Activated CD4-positive, alpha-beta T cell treated with anti-CD3 and anti-CD28 coated beads, Interleukin-2, amount 10 ng/mL, durations not matched to agents 24 days and 14 days (primary cell): ENCODE measurements at regions of chr19 and their contacts with region 1.

Region 1: DNA sequence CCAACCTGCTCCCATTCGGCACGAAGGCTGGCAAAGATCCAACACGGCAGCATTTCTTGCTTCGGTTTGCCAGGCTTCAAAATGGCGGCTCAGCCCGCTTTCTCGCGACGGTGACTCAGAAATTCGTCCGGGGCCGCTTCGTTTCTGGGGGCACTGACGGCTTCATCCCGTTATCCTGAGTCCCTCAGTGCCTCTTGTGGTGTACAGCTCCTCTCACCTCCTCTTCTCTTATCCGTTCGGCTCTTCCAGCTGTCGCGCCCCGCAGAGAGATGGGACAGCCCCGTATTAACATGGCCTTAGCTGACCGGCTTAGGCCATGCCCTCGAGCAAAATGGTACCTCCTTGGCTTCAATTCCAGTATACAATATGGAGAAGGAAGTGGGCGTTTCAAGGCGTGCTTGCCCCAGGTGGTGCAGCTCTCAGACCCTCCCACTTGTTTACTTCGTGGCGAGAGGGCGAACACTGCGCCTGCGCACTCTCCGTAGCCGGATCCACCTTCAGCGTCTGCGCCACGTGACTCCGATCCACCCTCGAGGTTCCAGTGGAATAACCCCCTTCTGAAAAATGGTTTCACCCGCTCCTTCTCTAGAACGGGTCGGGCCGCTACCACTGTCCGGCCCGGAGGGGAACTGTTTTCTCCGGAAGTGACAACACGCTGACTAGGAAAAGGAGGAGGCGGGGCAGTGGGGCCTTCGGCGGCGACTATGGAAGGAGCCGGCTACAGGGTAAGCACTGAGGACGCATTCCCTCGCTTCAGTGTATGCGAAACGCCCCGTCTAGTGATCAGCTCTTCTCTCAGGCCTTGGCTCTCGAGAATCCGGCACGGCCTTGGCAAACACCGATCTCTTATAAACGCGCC is at the starts of genes AKT1S1 and TBC1D17:
- DNase-seq: peak; percentile 100
- H3K4me3 Mint-ChIP-seq: no peak within 1 kb of the TSS
- H3K27ac Mint-ChIP-seq: no peak within 1 kb of the TSS
- H3K4me1 Mint-ChIP-seq: peaks cover 23% of the 10 kb centered on the region
- H3K27me3 Mint-ChIP-seq: no peaks in the 10 kb centered on the region
- total RNA-seq, gene AKT1S1: 31.5 and 33.5 TPM in 2 replicates
- total RNA-seq, gene TBC1D17: 36.5 and 36.8 TPM in 2 replicates

Region 2: GRCh38 chr19:49497047-49497788 is 380.0 kb before region 1 on chr19:
- intact Hi-C with region 1: loop called (anchors 1 kb)
- DNase-seq: peak; percentile 93
- H3K4me3 Mint-ChIP-seq: peak overlapping the region; percentile 98
- H3K27ac Mint-ChIP-seq: peak overlapping the region; percentile 99
- H3K4me1 Mint-ChIP-seq: peaks cover 57% of the 10 kb centered on the region
- H3K27me3 Mint-ChIP-seq: no peaks in the 10 kb centered on the region

Region 3: GRCh38 chr19:49640113-49640898 is 236.9 kb before region 1 on chr19 and contains the start of gene RRAS:
- intact Hi-C with region 1: loop called (anchors 2 kb)
- DNase-seq: peak; percentile 100
- H3K4me3 Mint-ChIP-seq: peak within 1 kb of the TSS; percentile 97
- H3K27ac Mint-ChIP-seq: peak within 1 kb of the TSS; percentile 100
- H3K4me1 Mint-ChIP-seq: peaks cover 52% of the 10 kb centered on the region
- H3K27me3 Mint-ChIP-seq: no peaks in the 10 kb centered on the region
- total RNA-seq, gene RRAS: 4.1 and 5.0 TPM in 2 replicates

Region 4: GRCh38 chr19:49651029-49651825 is 226.0 kb before region 1 on chr19:
- intact Hi-C with region 1: no loop called
- DNase-seq: no peak
- H3K4me3 Mint-ChIP-seq: no peak overlapping the region
- H3K27ac Mint-ChIP-seq: no peak overlapping the region
- H3K4me1 Mint-ChIP-seq: no peaks in the 10 kb centered on the region
- H3K27me3 Mint-ChIP-seq: no peaks in the 10 kb centered on the region

Region 5: GRCh38 chr19:49766007-49766937 is 111.0 kb before region 1 on chr19:
- intact Hi-C with region 1: loop called (anchors 1 kb)
- DNase-seq: peak; percentile 100
- H3K4me3 Mint-ChIP-seq: peak overlapping the region; percentile 91
- H3K27ac Mint-ChIP-seq: peak overlapping the region; percentile 92
- H3K4me1 Mint-ChIP-seq: peaks cover 32% of the 10 kb centered on the region
- H3K27me3 Mint-ChIP-seq: no peaks in the 10 kb centered on the region

Region 6: DNA sequence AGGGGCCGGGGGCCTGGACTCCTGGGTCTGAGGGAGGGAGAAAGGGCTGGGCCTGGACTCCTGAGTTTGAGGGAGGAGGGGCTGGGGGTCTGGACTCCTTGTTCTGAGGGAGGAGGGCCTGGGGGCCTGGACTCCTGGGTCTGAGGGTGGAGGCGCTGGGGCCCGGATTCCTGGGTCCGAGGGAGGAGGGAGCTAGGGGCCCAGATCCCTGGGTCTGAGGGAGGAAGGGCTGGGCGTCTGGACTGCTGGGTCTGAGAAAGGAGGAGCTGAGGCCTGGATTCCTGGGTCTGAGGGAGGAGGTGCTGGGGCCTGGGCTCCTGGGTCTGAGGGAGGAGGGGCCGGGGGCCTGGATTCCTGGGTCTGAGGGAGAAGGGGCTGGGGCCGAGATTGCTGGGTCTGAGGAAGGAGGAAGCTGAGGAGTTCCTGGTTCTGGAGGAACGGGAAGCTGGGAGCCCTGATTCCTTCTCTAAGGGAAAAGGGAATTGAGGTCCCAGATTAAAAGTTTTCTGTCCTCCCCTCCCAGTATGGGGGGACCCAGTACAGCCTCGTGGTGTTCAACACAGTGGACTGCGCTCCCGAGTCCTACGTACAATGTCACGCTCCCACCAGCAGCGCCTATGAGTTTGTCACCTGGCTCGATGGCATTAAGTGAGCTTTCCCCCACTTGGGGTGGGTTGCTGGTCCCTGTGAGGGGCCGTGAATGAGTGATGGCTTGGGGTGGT is 58.4 kb before region 1 on chr19:
- intact Hi-C with region 1: no loop called
- DNase-seq: peak; percentile 64
- H3K4me3 Mint-ChIP-seq: peak overlapping the region; percentile 88
- H3K27ac Mint-ChIP-seq: peak overlapping the region; percentile 92
- H3K4me1 Mint-ChIP-seq: peaks cover 14% of the 10 kb centered on the region
- H3K27me3 Mint-ChIP-seq: peaks cover 2% of the 10 kb centered on the region

Region 7: GRCh38 chr19:49850473-49851342 is 26.5 kb before region 1 on chr19 and contains the start of gene PTOV1:
- intact Hi-C with region 1: loop called (anchors 1 kb)
- DNase-seq: peak; percentile 98
- H3K4me3 Mint-ChIP-seq: peak within 1 kb of the TSS; percentile 91
- H3K27ac Mint-ChIP-seq: peak within 1 kb of the TSS; percentile 96
- H3K4me1 Mint-ChIP-seq: peaks cover 38% of the 10 kb centered on the region
- H3K27me3 Mint-ChIP-seq: peaks cover 4% of the 10 kb centered on the region
- total RNA-seq, gene PTOV1: 121 and 124 TPM in 2 replicates

Region 8: GRCh38 chr19:49929611-49930482 is 52.6 kb after region 1 on chr19:
- intact Hi-C with region 1: loop called (anchors 1 kb)
- DNase-seq: peak; percentile 98
- H3K4me3 Mint-ChIP-seq: peak overlapping the region; percentile 97
- H3K27ac Mint-ChIP-seq: peak overlapping the region; percentile 100
- H3K4me1 Mint-ChIP-seq: peaks cover 54% of the 10 kb centered on the region
- H3K27me3 Mint-ChIP-seq: peaks cover 3% of the 10 kb centered on the region

Region 9: GRCh38 chr19:50025024-50025789 is 148.0 kb after region 1 on chr19 and contains the start of gene VRK3:
- intact Hi-C with region 1: loop called (anchors 1 kb)
- DNase-seq: peak; percentile 100
- H3K4me3 Mint-ChIP-seq: peak within 1 kb of the TSS; percentile 95
- H3K27ac Mint-ChIP-seq: peak within 1 kb of the TSS; percentile 99
- H3K4me1 Mint-ChIP-seq: peaks cover 34% of the 10 kb centered on the region
- H3K27me3 Mint-ChIP-seq: peaks cover 2% of the 10 kb centered on the region
- total RNA-seq, gene VRK3: 66.1 and 70.0 TPM in 2 replicates